Dendritic cell treated with granulocyte-macrophage colony-stimulating factor and Interleukin-4, amounts not matched to agents 40 ng/mL and 50 ng/mL, for 4 days (primary cell): ENCODE measurements at regions of chr11 and their contacts with region 1.

Region 1: DNA sequence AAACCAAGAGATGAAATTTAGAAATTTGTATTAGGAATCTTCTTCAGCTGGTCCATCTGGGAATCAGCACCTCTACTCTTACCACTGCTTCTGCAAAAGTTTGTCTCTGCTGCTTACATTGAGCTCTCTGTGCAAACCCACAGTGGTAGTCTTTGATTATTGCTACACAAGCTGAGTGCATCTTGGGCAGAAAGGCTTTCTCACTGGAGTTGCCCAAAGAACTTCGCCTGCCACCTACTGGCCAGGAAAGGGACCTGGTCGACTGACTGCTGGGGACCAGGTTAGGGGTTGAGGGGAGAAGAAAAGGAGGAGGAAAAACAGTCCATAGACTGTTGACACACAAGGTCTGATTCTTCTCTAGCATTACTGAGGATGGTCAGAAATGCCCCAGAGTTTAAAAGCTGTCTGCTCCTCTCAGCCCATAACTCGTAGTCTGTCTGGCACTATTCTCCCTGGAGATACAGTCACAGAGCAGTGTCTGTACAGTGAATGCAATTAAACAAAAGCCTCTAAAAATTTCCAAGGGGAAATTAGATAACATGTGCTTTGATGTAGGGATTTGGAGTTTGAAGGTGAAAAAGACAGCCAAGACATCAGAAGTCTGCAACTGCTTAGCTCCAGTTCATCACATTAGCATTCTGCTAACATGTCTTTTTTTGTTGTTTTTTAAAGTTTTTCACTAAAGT is 215.0 kb upstream of the CTSC start:
- H3K4me3 Mint-ChIP-seq: no peak overlapping the region
- H3K27ac Mint-ChIP-seq: no peak overlapping the region
- H3K4me1 Mint-ChIP-seq: no peaks in the 10 kb centered on the region
- H3K27me3 Mint-ChIP-seq: peaks cover 3% of the 10 kb centered on the region

Region 2: GRCh38 chr11:87352759-87353707 is 1199.5 kb before region 1 on chr11:
- intact Hi-C with region 1: loop called (anchors 5 kb)
- H3K4me3 Mint-ChIP-seq: no peak overlapping the region
- H3K27ac Mint-ChIP-seq: no peak overlapping the region
- H3K4me1 Mint-ChIP-seq: peaks cover 12% of the 10 kb centered on the region
- H3K27me3 Mint-ChIP-seq: no peaks in the 10 kb centered on the region

Region 3: GRCh38 chr11:87722756-87723565 is 829.6 kb before region 1 on chr11:
- intact Hi-C with region 1: loop called (anchors 10 kb)
- H3K4me3 Mint-ChIP-seq: no peak overlapping the region
- H3K27ac Mint-ChIP-seq: no peak overlapping the region
- H3K4me1 Mint-ChIP-seq: no peaks in the 10 kb centered on the region
- H3K27me3 Mint-ChIP-seq: no peaks in the 10 kb centered on the region

Region 4: DNA sequence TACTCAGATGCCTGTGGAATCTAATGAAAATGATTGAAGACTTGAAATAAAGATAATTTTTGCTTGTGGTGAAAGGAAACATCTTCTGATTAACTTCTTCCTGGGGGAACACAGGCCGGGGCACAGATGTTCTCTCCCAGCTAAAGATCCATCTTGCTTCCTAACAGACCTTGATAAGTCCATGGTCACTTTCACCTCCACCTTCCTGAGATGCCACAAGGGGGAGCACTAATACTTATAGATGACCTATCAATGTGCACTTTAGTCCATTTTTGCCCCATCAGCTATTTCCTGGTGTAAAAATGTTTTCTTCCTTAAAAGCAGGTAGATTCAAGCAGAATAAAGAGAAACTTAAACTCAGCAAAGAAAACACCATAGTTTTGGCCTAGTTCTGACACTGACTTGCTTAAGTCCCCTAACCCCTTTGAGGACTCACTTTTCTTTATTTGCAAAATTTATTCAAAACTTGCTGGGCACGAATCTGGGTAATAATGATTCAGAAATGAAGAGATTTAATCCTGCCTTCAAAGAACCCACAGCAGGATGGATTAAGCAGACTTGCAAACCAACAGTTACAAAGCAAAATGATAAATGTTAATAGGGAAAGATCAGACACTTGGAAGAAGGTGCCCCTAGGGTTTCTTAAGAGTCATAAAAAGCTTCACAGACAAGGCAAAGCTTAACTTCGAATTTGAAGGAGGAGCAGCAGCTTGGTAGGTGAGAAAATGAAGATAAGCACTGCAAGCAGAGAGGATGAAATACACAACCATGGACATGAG is 535.9 kb before region 1 on chr11:
- intact Hi-C with region 1: loop called (anchors 1 kb)
- H3K4me3 Mint-ChIP-seq: no peak overlapping the region
- H3K27ac Mint-ChIP-seq: no peak overlapping the region
- H3K4me1 Mint-ChIP-seq: no peaks in the 10 kb centered on the region
- H3K27me3 Mint-ChIP-seq: no peaks in the 10 kb centered on the region

Region 5: GRCh38 chr11:88103337-88104206 is 448.9 kb before region 1 on chr11:
- intact Hi-C with region 1: loop called (anchors 2 kb)
- H3K4me3 Mint-ChIP-seq: no peak overlapping the region
- H3K27ac Mint-ChIP-seq: no peak overlapping the region
- H3K4me1 Mint-ChIP-seq: peaks cover 10% of the 10 kb centered on the region
- H3K27me3 Mint-ChIP-seq: no peaks in the 10 kb centered on the region